Activated CD4-positive, alpha-beta T cell treated with anti-CD3 and anti-CD28 coated beads for 36 hours (primary cell): ENCODE measurements at regions of chr1 and their contacts with region 1.

Region 1: DNA sequence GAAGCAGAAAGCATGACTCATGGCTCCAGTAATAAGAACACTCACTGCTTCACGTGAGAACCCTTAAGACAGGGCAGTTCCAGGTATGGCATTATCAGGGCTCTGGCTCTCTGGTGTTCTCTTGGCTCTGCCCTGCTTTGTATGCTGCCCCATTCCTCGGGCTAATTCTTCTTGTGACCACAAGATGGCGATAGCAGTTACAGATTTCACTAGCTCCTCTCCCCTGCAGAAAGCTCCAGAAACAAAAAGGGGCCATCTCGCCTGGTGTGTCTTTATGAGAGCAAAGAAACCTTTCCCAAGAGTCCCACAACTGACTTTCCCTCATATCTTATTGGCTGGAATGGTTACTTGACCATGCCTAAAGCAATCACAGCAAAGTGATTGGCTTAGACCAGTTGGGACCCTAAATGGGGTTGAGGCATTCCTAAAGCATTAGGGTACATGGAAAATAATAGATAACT is 60.1 kb downstream of the F3 start:
- DNase-seq: peak; percentile 36
- ATAC-seq: peak; percentile 87
- H3K4me3 Mint-ChIP-seq: no peak overlapping the region
- H3K27ac Mint-ChIP-seq: no peak overlapping the region
- H3K4me1 Mint-ChIP-seq: no peaks in the 10 kb centered on the region
- H3K27me3 Mint-ChIP-seq: no peaks in the 10 kb centered on the region

Region 2: GRCh38 chr1:94471271-94471670 is 10.2 kb before region 1 on chr1:
- CTCF ChIA-PET with region 1: interaction called, 23 read pairs
- POLR2A ChIA-PET with region 1: no interaction called
- intact Hi-C with region 1: no loop called
- DNase-seq: no peak
- ATAC-seq: no peak
- H3K4me3 Mint-ChIP-seq: no peak overlapping the region
- H3K27ac Mint-ChIP-seq: no peak overlapping the region
- H3K4me1 Mint-ChIP-seq: no peaks in the 10 kb centered on the region
- H3K27me3 Mint-ChIP-seq: no peaks in the 10 kb centered on the region

Region 3: DNA sequence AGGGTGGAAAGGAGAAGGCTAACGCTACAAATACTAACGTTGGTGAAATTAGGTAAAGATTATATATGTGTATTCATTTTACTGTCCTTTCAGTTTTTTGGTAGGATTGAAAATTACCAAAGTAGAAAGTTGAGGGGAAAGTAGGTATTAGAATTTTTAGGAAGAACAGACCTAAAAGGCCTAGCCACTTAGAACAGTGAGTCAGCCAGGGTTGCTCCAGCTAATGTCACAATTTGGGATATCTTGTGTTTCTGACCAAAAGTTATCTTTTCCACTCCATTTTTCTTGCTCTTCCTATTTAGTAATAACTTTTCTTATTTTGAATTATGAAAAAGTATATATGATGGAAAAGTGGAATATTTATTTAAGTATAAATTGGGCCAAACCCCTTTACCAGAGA is 19.9 kb after region 1 on chr1:
- CTCF ChIA-PET with region 1: interaction called, 15 read pairs
- POLR2A ChIA-PET with region 1: no interaction called
- intact Hi-C with region 1: no loop called
- DNase-seq: no peak
- ATAC-seq: no peak
- H3K4me3 Mint-ChIP-seq: no peak overlapping the region
- H3K27ac Mint-ChIP-seq: no peak overlapping the region
- H3K4me1 Mint-ChIP-seq: no peaks in the 10 kb centered on the region
- H3K27me3 Mint-ChIP-seq: no peaks in the 10 kb centered on the region

Region 4: DNA sequence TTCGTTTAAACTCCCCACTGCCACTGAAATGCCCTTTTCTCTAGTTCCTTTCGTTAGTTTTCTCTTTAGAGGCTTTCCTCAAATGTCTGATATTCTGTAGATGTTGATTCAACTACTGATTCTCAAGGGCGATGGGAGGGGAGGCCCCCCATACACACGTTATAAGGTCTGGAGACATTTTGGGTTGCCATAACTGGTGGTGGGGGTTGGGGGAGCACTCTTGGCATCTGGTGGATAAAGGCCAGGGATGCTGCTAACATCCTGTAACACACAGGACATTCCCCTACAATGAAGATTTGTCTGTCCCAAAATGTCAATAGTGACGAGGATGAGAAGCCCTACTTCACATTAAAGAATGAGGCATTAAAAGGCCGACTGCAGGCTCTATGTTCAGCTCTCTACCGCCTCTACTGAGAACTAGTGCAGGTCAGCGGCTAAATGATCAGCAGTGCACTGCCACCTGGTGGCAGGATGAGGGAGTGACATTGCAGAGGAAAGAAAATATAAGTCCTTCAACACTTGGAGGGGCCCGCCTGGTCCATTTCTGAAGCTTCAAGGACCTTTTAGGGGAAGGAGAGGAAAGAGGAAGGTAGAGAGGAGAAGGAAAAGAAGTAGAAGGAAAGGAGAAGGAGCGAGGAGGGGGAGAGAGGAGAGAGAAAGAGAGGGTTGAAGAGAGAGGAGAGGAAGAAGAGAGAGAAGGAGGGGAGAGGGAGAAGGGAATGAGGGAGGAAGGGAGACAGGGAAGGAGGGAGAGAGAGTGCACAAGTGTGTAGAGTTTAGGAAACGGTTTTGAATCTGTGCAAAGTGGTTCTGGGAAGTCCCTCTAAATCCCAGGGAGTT is 561.9 kb after region 1 on chr1:
- CTCF ChIA-PET with region 1: interaction called, 4 read pairs
- POLR2A ChIA-PET with region 1: no interaction called
- intact Hi-C with region 1: loop called in 1 of 2 experiments (anchors 10 kb)
- DNase-seq: peak; percentile 86
- ATAC-seq: peak; percentile 95
- H3K4me3 Mint-ChIP-seq: no peak overlapping the region
- H3K27ac Mint-ChIP-seq: no peak overlapping the region
- H3K4me1 Mint-ChIP-seq: no peaks in the 10 kb centered on the region
- H3K27me3 Mint-ChIP-seq: no peaks in the 10 kb centered on the region